WTC11 (cell line): ENCODE measurements at regions of chr17 and their contacts with region 1.

Region 1: DNA sequence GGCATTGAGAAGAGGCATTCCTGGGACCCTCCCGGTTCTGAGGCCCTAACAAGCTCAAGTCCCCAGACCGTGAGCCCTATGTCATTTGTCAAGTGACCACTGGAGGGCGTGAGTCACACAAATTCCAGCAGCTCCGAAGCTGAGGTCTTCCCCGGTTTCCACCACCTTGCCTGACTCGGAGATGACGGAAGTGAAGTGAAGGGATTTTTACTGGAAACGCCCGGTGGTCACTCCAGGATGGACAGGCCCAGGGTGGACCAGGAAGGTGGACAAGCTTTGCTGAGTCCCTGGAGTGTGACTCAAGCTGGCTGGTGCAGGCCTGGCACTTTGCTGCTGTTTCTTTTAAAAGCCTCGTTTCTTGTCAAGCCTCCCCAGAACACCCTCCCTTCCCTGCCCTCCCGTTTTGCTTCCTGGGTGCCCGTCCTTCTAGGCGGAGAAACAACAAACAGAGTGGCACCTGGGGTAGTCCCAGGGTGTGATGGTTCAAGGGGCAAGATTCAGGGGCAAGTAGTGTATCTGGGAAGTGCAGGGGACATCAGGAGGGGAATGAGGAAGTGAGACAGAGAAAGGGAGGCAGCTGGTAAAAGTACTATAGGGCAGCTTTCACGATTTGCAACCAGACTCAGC is 5.3 kb upstream of the NOS2 start:
- DNase-seq: peak; percentile 91
- ATAC-seq: peak; percentile 89
- H3K4me3 Mint-ChIP-seq: peak overlapping the region; percentile 51
- H3K27ac Mint-ChIP-seq: no peak overlapping the region
- H3K4me1 Mint-ChIP-seq: peaks cover 23% of the 10 kb centered on the region
- H3K27me3 Mint-ChIP-seq: no peaks in the 10 kb centered on the region
- CTCF ChIP-seq: peak; percentile 74

Region 2: GRCh38 chr17:27760069-27760885 is 45.4 kb before region 1 on chr17:
- CTCF ChIA-PET with region 1: interaction called, 32 read pairs
- POLR2A ChIA-PET with region 1: no interaction called
- DNase-seq: peak; percentile 87
- ATAC-seq: peak; percentile 85
- H3K4me3 Mint-ChIP-seq: no peak overlapping the region
- H3K27ac Mint-ChIP-seq: no peak overlapping the region
- H3K4me1 Mint-ChIP-seq: no peaks in the 10 kb centered on the region
- H3K27me3 Mint-ChIP-seq: no peaks in the 10 kb centered on the region
- CTCF ChIP-seq: peak; percentile 99

Region 3: GRCh38 chr17:27782791-27783206 is 22.8 kb before region 1 on chr17:
- CTCF ChIA-PET with region 1: interaction called, 10 read pairs
- POLR2A ChIA-PET with region 1: no interaction called
- DNase-seq: no peak
- ATAC-seq: no peak
- H3K4me3 Mint-ChIP-seq: no peak overlapping the region
- H3K27ac Mint-ChIP-seq: no peak overlapping the region
- H3K4me1 Mint-ChIP-seq: peaks cover 16% of the 10 kb centered on the region
- H3K27me3 Mint-ChIP-seq: no peaks in the 10 kb centered on the region; the same call in 1 of the 2 replicates
- CTCF ChIP-seq: no peak

Region 4: GRCh38 chr17:27793168-27793905 is 12.3 kb before region 1 on chr17:
- CTCF ChIA-PET with region 1: interaction called, 30 read pairs
- POLR2A ChIA-PET with region 1: no interaction called
- DNase-seq: peak; percentile 51
- ATAC-seq: peak; percentile 76
- H3K4me3 Mint-ChIP-seq: peak overlapping the region; percentile 62
- H3K27ac Mint-ChIP-seq: no peak overlapping the region
- H3K4me1 Mint-ChIP-seq: peaks cover 7% of the 10 kb centered on the region
- H3K27me3 Mint-ChIP-seq: peaks cover 35% of the 10 kb centered on the region
- CTCF ChIP-seq: no peak

Region 5: GRCh38 chr17:27848931-27849330 is 43.3 kb after region 1 on chr17:
- CTCF ChIA-PET with region 1: interaction called, 14 read pairs
- POLR2A ChIA-PET with region 1: no interaction called
- DNase-seq: no peak
- ATAC-seq: no peak
- H3K4me3 Mint-ChIP-seq: no peak overlapping the region
- H3K27ac Mint-ChIP-seq: no peak overlapping the region
- H3K4me1 Mint-ChIP-seq: peaks cover 19% of the 10 kb centered on the region
- H3K27me3 Mint-ChIP-seq: no peaks in the 10 kb centered on the region
- CTCF ChIP-seq: no peak

Region 6: DNA sequence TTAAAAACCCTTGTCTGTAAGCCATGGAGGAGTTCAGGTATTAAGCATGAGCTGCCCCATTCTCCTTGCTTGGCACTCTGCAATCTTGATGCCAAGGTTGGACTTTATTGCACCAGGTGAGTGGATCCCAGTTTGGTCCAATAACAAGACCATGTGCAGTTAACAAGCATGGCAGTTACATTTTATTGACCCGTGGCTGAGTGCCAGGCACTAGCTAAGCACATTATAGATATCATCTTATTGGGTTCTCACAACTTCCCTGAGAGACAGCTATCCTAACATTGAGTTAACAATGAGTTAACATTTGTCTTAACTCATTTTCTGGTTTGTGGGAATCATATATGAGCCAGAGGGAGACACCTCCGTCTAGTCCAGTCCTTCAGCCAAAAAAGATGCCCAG is 65.8 kb after region 1 on chr17:
- CTCF ChIA-PET with region 1: interaction called, 480 read pairs
- POLR2A ChIA-PET with region 1: no interaction called
- DNase-seq: no peak
- ATAC-seq: no peak
- H3K4me3 Mint-ChIP-seq: no peak overlapping the region
- H3K27ac Mint-ChIP-seq: no peak overlapping the region
- H3K4me1 Mint-ChIP-seq: peaks cover 5% of the 10 kb centered on the region; the same call in 1 of the 2 replicates
- H3K27me3 Mint-ChIP-seq: 0 out of 2 replicates have a peak, but pooled peaks cover 2% of the 10 kb centered on the region
- CTCF ChIP-seq: no peak

Region 7: DNA sequence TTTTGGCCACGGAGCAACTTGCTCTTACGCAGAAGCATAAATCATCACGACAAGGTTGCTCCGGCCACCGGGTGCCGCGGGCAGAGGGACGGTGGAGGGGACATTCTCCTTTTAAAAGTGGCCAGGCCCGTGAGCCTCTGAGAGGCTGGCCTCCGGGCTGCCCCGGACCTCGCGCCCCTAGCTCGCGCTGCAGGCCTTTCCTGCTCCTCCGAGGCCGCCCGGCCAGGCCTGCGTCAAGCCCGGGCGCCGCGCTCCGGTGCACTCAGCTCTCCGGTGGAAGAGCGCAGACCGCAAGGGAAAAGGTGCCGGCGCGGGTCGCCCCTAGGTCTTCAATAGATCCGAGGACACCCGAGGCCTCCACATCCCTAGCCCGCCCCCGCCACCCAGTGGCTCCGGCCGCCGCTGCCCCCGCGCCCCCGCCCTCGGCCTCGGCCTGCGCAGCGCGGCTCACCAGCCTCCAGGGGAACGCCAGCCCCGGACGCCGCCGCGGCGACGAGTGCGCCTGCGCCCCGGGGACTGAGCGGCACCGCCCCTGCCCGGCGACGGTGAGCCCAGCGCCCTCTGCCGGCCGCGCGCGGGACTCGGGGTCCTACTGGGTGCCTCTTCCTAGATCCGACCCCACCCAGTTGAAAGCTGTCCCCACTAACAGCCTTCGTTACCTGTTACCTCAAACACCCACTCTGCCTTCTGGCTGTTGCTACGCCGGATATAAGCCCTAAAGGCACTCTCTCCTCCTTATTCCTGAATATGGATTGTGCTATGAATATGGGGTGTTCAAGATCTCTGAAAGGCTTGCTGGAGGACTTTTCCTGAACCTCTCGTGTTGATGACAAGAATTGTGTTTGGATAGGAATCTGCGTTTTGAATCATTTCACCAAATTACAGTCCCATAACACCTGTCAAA is 87.5 kb after region 1 on chr17 and contains the start of gene LYRM9:
- CTCF ChIA-PET with region 1: interaction called, 109 read pairs
- POLR2A ChIA-PET with region 1: interaction called, 4 read pairs
- DNase-seq: peak; percentile 95
- ATAC-seq: peak; percentile 90
- H3K4me3 Mint-ChIP-seq: peak within 1 kb of the TSS; percentile 61
- H3K27ac Mint-ChIP-seq: peak within 1 kb of the TSS; percentile 6; the same call in 1 of the 2 replicates
- H3K4me1 Mint-ChIP-seq: peaks cover 74% of the 10 kb centered on the region
- H3K27me3 Mint-ChIP-seq: peaks cover 10% of the 10 kb centered on the region
- CTCF ChIP-seq: peak; percentile 71; the same call in 1 of the 2 replicates
- total RNA-seq, gene LYRM9: 3.6 to 4.1 TPM (median 3.8 TPM) in 3 replicates